PC-9 (cell line): ENCODE measurements at regions of chr15 and their contacts with region 1.

Region 1: DNA sequence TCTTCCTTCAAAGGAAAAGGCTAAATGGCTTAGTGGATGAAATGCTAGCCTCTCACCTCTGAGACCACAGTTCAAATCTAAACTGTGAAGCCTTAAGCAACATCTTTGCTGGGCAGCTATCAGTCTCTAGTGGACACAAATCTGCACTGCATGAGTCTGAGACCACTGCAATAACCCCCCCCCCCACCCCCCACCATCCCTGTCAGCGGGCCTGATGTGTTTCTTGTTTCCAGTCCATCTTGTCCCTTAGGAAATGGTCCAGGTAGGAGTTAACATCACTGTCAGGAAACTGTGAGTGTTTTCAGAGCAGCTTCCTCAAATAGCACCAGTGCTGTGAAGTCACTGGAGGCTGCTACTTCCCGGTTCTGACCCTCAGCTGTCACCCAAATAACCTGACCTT is 140.6 kb upstream of the TMCO5A start:
- DNase-seq: no peak
- H3K4me3 ChIP-seq: no peak overlapping the region
- H3K27ac ChIP-seq: no peak overlapping the region
- H3K4me1 ChIP-seq: peaks cover 8% of the 10 kb centered on the region; the same call in 1 of the 2 replicates
- H3K27me3 ChIP-seq: no peaks in the 10 kb centered on the region
- CTCF ChIP-seq: no peak

Region 2: DNA sequence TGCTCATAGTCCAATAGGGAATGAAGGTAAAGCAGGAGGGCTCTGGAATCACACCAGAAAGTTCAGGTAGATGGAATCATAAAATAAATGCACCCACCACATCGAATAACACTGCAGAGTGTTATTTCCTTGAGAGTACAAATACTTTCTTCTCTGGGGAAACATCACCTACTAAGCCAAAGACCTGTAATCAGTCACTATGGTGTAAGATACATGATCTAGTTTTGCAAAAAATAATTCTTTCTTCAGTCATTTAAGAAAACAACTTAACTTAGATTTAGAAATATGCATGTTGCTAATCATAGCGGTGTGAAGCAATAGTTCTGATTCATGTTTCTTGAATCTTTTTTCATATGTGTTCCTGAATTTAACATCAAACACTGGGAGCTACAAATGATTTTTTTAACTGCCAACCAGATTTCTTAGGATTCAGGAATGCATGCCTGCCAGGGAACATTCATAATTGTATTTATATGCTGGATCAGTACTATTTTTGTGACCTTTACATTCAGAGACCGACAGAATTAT is 653.3 kb before region 1 on chr15:
- CTCF ChIA-PET with region 1: no interaction called
- POLR2A ChIA-PET with region 1: interaction called, 11 read pairs
- intact Hi-C with region 1: no loop called
- DNase-seq: no peak
- H3K4me3 ChIP-seq: no peak overlapping the region
- H3K27ac ChIP-seq: no peak overlapping the region
- H3K4me1 ChIP-seq: no peaks in the 10 kb centered on the region
- H3K27me3 ChIP-seq: no peaks in the 10 kb centered on the region
- CTCF ChIP-seq: no peak

Region 3: GRCh38 chr15:37900326-37901221 is 106.7 kb after region 1 on chr15:
- CTCF ChIA-PET with region 1: no interaction called
- POLR2A ChIA-PET with region 1: no interaction called
- intact Hi-C with region 1: no loop called
- DNase-seq: peak in 1 of 2 experiments; percentile 7
- H3K4me3 ChIP-seq: no peak overlapping the region
- H3K27ac ChIP-seq: 0 out of 2 replicates have a peak overlapping the region, but pooled peaks have one; percentile 13
- H3K4me1 ChIP-seq: peaks cover 9% of the 10 kb centered on the region
- H3K27me3 ChIP-seq: no peaks in the 10 kb centered on the region
- CTCF ChIP-seq: no peak